ENCODE measurements at regions of chr12 and their contacts with region 1.

Region 1: GRCh38 chr12:11648831-11649702 is at the start of gene ETV6:
- DNase-seq: peak; percentile 22 to 88 (median 64)
- ATAC-seq: peak; percentile 50
- H3K4me3 ChIP-seq: peak within 1 kb of the TSS; percentile 92 to 98
- H3K4me3 Mint-ChIP-seq: peak within 1 kb of the TSS; percentile 96
- H3K27ac ChIP-seq: peak within 1 kb of the TSS; percentile 75 to 76
- H3K27ac Mint-ChIP-seq: peak within 1 kb of the TSS; percentile 94
- H3K4me1 ChIP-seq: peaks cover 31% of the 10 kb centered on the region
- H3K4me1 Mint-ChIP-seq: peaks cover 38% of the 10 kb centered on the region
- H3K27me3 ChIP-seq: no peaks in the 10 kb centered on the region
- H3K27me3 Mint-ChIP-seq: no peaks in the 10 kb centered on the region
- CTCF ChIP-seq: no peak
- total RNA-seq, gene ETV6: 11.3 to 13.9 TPM

Region 2: DNA sequence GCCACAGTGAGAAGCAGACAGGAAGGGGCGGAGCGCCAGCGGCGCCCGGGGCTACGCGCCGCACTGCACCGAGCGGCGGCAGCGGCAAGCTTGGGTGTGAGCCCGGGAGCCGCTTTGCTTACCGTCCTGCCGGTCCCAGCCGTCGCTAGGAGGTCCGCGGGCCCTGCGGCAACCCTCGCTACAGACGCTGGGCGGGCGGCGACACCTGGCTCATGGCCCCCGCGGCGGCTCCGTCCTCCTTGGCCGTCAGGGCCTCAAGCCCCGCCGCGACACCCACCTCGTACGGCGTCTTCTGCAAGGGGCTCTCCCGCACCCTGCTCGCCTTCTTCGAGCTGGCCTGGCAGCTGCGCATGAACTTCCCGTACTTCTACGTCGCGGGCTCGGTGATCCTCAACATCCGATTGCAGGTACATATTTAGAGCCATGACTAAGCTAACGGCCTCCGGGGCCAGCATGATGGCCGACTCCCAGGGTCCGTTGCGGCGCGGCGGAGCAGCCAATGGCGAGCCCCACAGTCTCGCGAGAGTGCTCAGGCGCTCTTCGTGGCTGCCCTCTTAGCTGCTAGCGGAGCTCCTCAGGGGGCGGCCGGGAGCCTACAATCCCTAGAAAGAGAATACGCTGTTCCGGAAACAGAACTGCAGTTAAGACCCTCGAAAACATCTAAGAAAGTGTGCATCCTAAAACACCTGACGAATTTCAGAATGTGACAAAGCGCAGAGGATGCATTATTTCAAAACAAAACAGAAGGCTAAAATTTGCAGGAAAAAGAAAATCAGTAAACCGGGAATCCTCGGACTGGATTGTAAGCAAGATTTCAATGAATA is 477.7 kb before region 1 on chr12 and contains the start of gene SMIM10L1:
- CTCF ChIA-PET with region 1: no interaction called
- POLR2A ChIA-PET with region 1: no interaction called
- intact Hi-C with region 1: loop called in 1 of 2 experiments (anchors 10 kb)
- DNase-seq: peak; percentile 78 to 95 (median 88)
- ATAC-seq: peak; percentile 91
- H3K4me3 ChIP-seq: peak within 1 kb of the TSS; percentile 56 to 73
- H3K4me3 Mint-ChIP-seq: peak within 1 kb of the TSS; percentile 99
- H3K27ac ChIP-seq: peak within 1 kb of the TSS; percentile 72 to 86
- H3K27ac Mint-ChIP-seq: peak within 1 kb of the TSS; percentile 100
- H3K4me1 ChIP-seq: peaks cover 38% of the 10 kb centered on the region
- H3K4me1 Mint-ChIP-seq: peaks cover 66% of the 10 kb centered on the region
- H3K27me3 ChIP-seq: no peaks in the 10 kb centered on the region
- H3K27me3 Mint-ChIP-seq: no peaks in the 10 kb centered on the region
- CTCF ChIP-seq: no peak
- total RNA-seq, gene SMIM10L1: 9.2 to 9.6 TPM

Region 3: GRCh38 chr12:11568155-11568761 is 80.8 kb before region 1 on chr12:
- CTCF ChIA-PET with region 1: no interaction called
- POLR2A ChIA-PET with region 1: no interaction called
- intact Hi-C with region 1: no loop called
- DNase-seq: no peak
- ATAC-seq: no peak
- H3K4me3 ChIP-seq: no peak overlapping the region
- H3K4me3 Mint-ChIP-seq: no peak overlapping the region
- H3K27ac ChIP-seq: no peak overlapping the region
- H3K27ac Mint-ChIP-seq: no peak overlapping the region
- H3K4me1 ChIP-seq: no peaks in the 10 kb centered on the region
- H3K4me1 Mint-ChIP-seq: no peaks in the 10 kb centered on the region
- H3K27me3 ChIP-seq: no peaks in the 10 kb centered on the region
- H3K27me3 Mint-ChIP-seq: no peaks in the 10 kb centered on the region
- CTCF ChIP-seq: no peak

Region 4: DNA sequence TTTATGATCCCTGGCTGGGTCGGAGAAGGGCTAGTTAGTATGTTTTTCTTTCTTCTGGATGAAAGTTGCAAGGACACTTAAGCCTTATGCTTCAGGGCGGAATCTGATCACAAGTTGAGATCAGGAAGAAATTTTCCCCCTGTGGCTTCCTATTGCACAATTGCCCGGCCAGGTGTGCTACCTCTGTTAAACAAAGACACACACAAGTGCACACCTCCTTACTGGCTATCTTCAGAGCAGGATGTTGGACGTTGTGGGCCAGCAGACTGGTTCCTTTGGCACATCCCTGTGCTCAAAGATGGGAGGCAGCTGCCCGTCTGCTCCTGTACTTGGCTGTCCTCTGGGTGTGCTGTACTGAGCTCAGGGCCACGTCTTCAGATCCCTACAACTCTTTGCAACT is 19.5 kb after region 1 on chr12:
- CTCF ChIA-PET with region 1: no interaction called
- POLR2A ChIA-PET with region 1: no interaction called
- intact Hi-C with region 1: no loop called
- DNase-seq: no peak
- ATAC-seq: no peak
- H3K4me3 ChIP-seq: no peak overlapping the region
- H3K4me3 Mint-ChIP-seq: no peak overlapping the region
- H3K27ac ChIP-seq: no peak overlapping the region
- H3K27ac Mint-ChIP-seq: no peak overlapping the region
- H3K4me1 ChIP-seq: no peaks in the 10 kb centered on the region
- H3K4me1 Mint-ChIP-seq: peaks cover 47% of the 10 kb centered on the region
- H3K27me3 ChIP-seq: no peaks in the 10 kb centered on the region
- H3K27me3 Mint-ChIP-seq: no peaks in the 10 kb centered on the region
- CTCF ChIP-seq: no peak

Region 5: DNA sequence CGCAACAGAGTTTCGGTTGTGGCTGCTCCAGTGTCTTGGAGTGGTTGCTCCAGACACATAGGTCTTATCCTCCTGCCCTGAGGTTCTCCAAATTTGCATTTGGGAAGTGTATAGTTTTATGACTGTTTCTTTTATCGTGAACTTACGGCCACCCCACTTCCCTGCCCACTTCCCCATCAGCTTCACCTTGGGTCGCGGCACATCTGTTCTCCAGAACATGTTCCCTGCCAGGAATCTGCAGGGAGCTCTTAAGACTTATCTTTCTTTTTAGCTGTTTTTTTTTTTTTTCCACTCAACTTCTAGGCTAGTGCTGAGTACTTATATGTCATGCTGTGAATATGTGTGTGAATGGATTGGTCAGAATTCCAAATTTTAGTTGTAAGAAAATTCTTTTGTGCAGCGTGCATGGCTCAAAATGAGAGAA is 75.8 kb after region 1 on chr12:
- CTCF ChIA-PET with region 1: no interaction called
- POLR2A ChIA-PET with region 1: no interaction called
- intact Hi-C with region 1: loop called (anchors 5 kb)
- DNase-seq: no peak
- ATAC-seq: no peak
- H3K4me3 ChIP-seq: no peak overlapping the region
- H3K4me3 Mint-ChIP-seq: no peak overlapping the region
- H3K27ac ChIP-seq: no peak overlapping the region
- H3K27ac Mint-ChIP-seq: no peak overlapping the region
- H3K4me1 ChIP-seq: peaks cover 17% of the 10 kb centered on the region
- H3K4me1 Mint-ChIP-seq: peaks cover 32% of the 10 kb centered on the region
- H3K27me3 ChIP-seq: no peaks in the 10 kb centered on the region
- H3K27me3 Mint-ChIP-seq: no peaks in the 10 kb centered on the region
- CTCF ChIP-seq: no peak

Region 6: DNA sequence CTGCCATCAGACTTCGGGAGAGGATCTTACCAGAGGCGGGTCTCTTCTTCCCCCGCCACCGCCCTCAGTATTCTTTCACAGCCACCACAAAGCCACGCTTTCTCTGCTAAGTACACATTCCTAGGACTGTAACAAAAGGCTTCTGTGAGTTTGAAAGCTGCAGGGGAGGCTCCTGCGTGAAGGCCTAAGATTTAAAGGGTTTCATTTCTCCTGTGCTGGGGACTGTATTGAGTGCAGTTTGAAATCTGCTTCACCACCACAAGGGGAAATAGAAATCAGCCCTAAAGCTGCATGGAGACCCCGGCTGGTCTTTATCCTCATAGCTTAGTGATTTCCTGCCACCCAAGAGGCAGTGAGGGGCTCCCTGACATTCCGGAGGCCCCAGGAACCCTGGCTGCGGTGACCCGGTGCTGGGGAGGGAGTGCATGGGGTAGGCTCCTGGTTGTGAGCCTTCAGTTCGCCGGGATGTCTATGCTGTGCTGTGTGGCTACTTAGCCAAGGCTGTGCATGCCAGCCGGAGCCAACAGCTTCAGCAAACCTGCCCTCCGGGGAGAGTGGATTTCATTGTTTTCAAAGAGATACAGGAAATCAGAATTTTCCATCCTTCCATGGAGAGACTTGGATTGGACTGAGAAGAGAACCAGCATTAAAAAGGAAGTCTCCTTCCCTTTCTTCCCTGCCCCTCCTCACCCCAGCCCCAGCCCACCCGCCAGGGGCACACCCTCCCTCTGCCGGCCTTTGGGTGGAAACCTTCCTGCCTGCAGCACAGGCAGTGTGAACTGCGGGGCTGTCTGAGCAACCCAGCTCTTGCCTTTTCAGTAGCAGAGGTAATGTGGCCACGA is 163.7 kb after region 1 on chr12:
- CTCF ChIA-PET with region 1: no interaction called
- POLR2A ChIA-PET with region 1: no interaction called
- intact Hi-C with region 1: loop called in 1 of 2 experiments (anchors 5 kb)
- DNase-seq: peak in 5 of 9 experiments; percentile 4 to 52 (median 23)
- ATAC-seq: peak; percentile 49
- H3K4me3 ChIP-seq: peak overlapping the region; percentile 0 to 26
- H3K4me3 Mint-ChIP-seq: peak overlapping the region; percentile 9
- H3K27ac ChIP-seq: no peak overlapping the region
- H3K27ac Mint-ChIP-seq: peak overlapping the region; percentile 34
- H3K4me1 ChIP-seq: peaks cover 18% of the 10 kb centered on the region
- H3K4me1 Mint-ChIP-seq: peaks cover 23% of the 10 kb centered on the region
- H3K27me3 ChIP-seq: no peaks in the 10 kb centered on the region
- H3K27me3 Mint-ChIP-seq: no peaks in the 10 kb centered on the region
- CTCF ChIP-seq: no peak

Region 7: DNA sequence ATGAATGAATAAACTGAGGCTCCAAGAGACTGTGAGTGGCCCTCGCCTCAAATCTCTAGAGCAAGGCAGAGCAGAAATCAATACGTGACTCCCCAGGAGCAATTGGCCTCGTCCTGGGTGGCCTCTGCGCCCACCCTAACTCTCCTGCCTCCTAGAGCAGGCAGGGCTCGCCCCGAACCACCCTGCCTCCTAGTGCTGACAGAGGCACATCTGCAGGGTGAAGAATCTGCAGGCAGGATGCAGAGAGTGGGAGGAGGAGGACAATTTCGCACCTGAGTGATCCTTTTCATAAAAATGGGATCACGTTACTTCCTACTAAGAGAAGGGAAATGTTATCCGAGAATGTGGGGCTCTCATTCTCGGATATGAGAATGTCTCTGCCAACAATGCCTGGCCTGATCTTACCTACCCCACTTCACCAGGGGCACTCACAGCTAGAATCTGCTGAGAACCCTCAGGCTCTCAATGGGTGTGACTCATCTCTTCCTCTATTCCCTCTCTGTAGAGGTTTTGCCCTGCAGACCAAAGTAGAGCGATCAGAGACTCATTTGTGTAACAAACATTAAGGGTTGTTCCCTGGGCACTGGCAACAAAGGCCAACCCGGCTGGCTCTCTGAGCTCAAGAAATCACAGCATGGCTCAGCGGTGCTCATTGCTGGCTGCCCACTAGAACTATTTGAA is 360.0 kb after region 1 on chr12:
- CTCF ChIA-PET with region 1: no interaction called
- POLR2A ChIA-PET with region 1: interaction called, 7 read pairs
- intact Hi-C with region 1: loop called in 1 of 2 experiments (anchors 1 kb)
- DNase-seq: peak in 7 of 9 experiments; percentile 15 to 71 (median 52)
- ATAC-seq: peak; percentile 66
- H3K4me3 ChIP-seq: no peak overlapping the region
- H3K4me3 Mint-ChIP-seq: peak overlapping the region; percentile 79
- H3K27ac ChIP-seq: no peak overlapping the region
- H3K27ac Mint-ChIP-seq: peak overlapping the region; percentile 88
- H3K4me1 ChIP-seq: peaks cover 48% of the 10 kb centered on the region
- H3K4me1 Mint-ChIP-seq: peaks cover 62% of the 10 kb centered on the region
- H3K27me3 ChIP-seq: peaks cover 0 to 9% of the 10 kb centered on the region in 2 experiments
- H3K27me3 Mint-ChIP-seq: no peaks in the 10 kb centered on the region
- CTCF ChIP-seq: peak; percentile 10

Region 8: DNA sequence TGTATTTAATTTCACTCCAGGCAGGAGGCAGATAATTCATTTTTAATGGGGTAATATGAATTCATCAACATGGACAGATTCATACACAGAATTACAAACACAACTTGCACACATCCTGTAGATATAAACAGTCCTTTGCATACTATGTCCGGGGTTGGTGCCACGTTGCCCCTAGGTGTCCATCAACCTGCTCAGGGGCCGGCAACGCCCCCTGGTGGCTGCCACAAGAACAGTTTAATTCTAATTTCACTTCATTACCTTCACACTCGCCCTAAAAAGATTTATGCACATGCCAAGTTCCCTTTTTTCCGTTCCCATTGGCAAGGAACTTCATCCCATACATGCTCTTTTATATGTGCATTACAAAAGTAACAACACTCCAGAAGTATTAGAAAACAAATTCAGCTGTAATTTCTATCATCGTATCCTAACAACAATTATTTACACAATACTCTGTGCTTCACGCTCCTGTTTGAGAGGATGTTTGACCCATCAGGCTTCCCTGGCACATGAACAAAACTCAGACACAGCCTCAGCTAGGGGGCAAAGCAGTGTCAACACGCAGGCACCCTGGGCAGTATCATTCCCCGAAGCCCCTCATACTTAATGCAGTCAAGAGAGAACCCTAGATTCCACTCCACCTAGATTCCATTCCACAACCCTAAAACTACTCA is 685.4 kb after region 1 on chr12:
- CTCF ChIA-PET with region 1: no interaction called
- POLR2A ChIA-PET with region 1: no interaction called
- intact Hi-C with region 1: no loop called
- DNase-seq: peak; percentile 13 to 80 (median 61)
- ATAC-seq: peak; percentile 66
- H3K4me3 ChIP-seq: no peak overlapping the region
- H3K4me3 Mint-ChIP-seq: no peak overlapping the region
- H3K27ac ChIP-seq: no peak overlapping the region
- H3K27ac Mint-ChIP-seq: no peak overlapping the region
- H3K4me1 ChIP-seq: peaks cover 7% of the 10 kb centered on the region
- H3K4me1 Mint-ChIP-seq: peaks cover 22% of the 10 kb centered on the region
- H3K27me3 ChIP-seq: no peaks in the 10 kb centered on the region
- H3K27me3 Mint-ChIP-seq: peaks cover 4% of the 10 kb centered on the region
- CTCF ChIP-seq: peak; percentile 91

Region 9: DNA sequence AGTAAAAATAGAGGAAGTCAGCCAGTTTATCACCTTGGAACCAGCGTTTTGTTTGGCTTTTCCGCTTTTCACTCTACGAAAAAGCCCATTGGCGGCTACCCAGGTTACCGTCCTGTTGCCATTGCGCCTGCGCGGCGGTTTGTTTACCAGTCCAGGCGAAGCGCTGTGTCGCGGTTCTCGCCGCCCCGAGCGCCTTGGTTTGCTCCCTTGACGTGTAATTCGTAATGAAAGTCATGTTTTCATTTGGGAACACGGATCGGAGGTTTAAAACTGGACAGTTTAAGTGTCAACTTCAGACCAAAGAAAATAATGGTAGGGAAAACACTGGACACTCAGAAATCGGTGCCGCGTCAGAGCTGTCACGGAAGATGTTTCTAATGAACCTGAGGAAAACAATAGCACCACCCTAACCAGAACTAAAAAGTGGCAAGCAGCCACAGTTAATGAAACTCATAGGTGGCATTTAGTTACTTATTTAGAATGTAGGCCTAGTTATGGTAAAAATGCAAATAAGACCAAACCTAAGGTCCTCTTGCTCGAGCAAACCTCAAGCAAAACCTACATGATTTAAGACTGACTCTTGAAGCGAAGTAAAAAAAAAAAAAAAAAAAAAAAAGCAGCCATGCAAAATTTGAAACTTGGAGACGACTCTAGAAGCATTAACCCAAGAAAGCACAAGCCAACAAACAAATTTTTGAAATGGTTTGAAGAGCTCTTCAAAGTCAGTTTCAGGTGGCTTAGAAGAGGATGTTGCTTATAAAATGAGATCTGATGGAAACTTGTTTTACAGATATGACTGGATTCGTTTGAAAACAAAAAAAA is 1047.7 kb after region 1 on chr12:
- CTCF ChIA-PET with region 1: no interaction called
- POLR2A ChIA-PET with region 1: no interaction called
- intact Hi-C with region 1: loop called in 1 of 2 experiments (anchors 5 kb)
- DNase-seq: peak; percentile 87 to 96 (median 94)
- ATAC-seq: peak; percentile 84
- H3K4me3 ChIP-seq: peak overlapping the region; percentile 42 to 88
- H3K4me3 Mint-ChIP-seq: peak overlapping the region; percentile 93
- H3K27ac ChIP-seq: peak overlapping the region; percentile 96 to 100
- H3K27ac Mint-ChIP-seq: peak overlapping the region; percentile 100
- H3K4me1 ChIP-seq: peaks cover 20% of the 10 kb centered on the region
- H3K4me1 Mint-ChIP-seq: peaks cover 29% of the 10 kb centered on the region
- H3K27me3 ChIP-seq: no peaks in the 10 kb centered on the region
- H3K27me3 Mint-ChIP-seq: no peaks in the 10 kb centered on the region
- CTCF ChIP-seq: no peak

Measured in CD8-positive, alpha-beta T cell (primary cell).